ENCODE measurements at regions of chr9 and their contacts with region 1.

Region 1: DNA sequence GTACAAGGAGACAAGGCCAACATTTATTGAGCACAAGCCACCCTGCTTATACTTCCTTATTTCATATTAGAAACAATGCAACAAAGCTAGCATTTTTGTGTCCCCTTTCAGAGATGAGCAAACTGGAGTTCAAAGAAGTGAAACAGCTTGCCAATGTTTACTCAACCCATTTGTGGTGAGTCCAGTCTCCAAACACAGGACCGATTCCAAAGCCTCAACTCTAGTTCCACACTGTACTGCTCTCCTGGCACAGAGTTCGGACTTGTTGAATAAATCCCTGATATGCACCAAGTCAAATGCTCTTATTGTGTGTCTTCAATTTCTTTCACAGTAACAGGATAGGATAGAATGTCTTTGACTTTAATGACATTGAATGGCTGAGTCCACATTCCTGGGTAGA is 604.8 kb upstream of the BRINP1 start:
- DNase-seq: peak; percentile 25
- H3K4me3 ChIP-seq: no peak overlapping the region
- H3K27ac ChIP-seq: no peak overlapping the region
- H3K4me1 ChIP-seq: no peaks in the 10 kb centered on the region
- H3K27me3 ChIP-seq: no peaks in the 10 kb centered on the region
- CTCF ChIP-seq: no peak
- POLR2A ChIP-seq: no peak

Region 2: DNA sequence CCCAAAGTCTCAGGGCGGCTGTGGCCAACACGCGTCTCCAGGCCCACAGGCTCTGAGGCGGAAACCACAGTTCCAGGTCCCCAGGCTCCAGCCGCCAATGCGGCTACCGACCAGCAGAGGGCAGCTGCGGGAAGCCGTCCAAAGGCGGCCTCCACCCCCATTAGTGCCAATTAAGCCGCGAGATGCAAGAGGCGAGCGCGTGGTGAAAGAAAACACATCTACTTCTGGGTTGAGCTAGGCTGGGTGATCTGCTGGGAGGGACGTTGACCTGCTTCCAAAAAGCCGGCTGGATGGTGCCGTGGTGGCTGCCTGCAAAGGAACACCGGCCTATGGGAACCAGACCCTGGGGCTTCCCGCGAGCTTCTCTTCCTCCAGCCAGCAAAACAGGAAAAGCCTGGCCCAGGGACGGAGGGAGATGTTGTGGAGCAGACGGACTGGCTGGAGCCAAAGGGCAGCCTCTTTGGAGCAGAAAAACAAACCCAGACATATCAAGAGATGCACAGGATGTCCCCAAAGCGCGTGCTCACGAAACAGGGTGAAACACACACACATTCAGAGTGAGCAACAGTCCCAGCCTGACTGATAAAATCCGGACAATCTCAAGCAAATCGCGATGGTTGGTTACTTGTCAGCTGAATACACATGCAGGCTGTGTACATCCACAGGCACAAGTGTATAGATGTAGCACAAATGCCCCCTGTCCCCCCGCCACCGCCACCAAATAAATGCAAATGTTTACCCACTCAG is 417.7 kb before region 1 on chr9:
- intact Hi-C with region 1: loop called (anchors 5 kb)
- DNase-seq: peak; percentile 85
- H3K4me3 ChIP-seq: peak overlapping the region; percentile 19 to 36
- H3K27ac ChIP-seq: peak overlapping the region in 1 of 2 donors; percentile 42
- H3K4me1 ChIP-seq: peaks cover 16% of the 10 kb centered on the region
- H3K27me3 ChIP-seq: no peaks in the 10 kb centered on the region
- CTCF ChIP-seq: peak; percentile 76 to 92 (median 86)
- POLR2A ChIP-seq: no peak

Region 3: GRCh38 chr9:119689879-119690278 is 284.1 kb before region 1 on chr9:
- intact Hi-C with region 1: no loop called
- DNase-seq: no peak
- H3K4me3 ChIP-seq: no peak overlapping the region
- H3K27ac ChIP-seq: no peak overlapping the region
- H3K4me1 ChIP-seq: no peaks in the 10 kb centered on the region
- H3K27me3 ChIP-seq: no peaks in the 10 kb centered on the region
- CTCF ChIP-seq: no peak
- POLR2A ChIP-seq: no peak

Region 4: GRCh38 chr9:119884438-119884837 is 89.6 kb before region 1 on chr9:
- intact Hi-C with region 1: no loop called
- DNase-seq: no peak
- H3K4me3 ChIP-seq: no peak overlapping the region
- H3K27ac ChIP-seq: no peak overlapping the region
- H3K4me1 ChIP-seq: no peaks in the 10 kb centered on the region
- H3K27me3 ChIP-seq: no peaks in the 10 kb centered on the region
- CTCF ChIP-seq: no peak
- POLR2A ChIP-seq: no peak

Region 5: GRCh38 chr9:120579182-120579749 is 605.2 kb after region 1 on chr9:
- intact Hi-C with region 1: no loop called
- DNase-seq: no peak
- H3K4me3 ChIP-seq: peak overlapping the region; percentile 76 to 84
- H3K27ac ChIP-seq: peak overlapping the region in 1 of 2 donors; percentile 73
- H3K4me1 ChIP-seq: peaks cover 11% of the 10 kb centered on the region
- H3K27me3 ChIP-seq: no peaks in the 10 kb centered on the region
- CTCF ChIP-seq: no peak
- POLR2A ChIP-seq: no peak

Measured in testis (tissue), 5 donors.